MCF 10A (cell line): ENCODE measurements at regions of chr1 and their contacts with region 1.

Region 1: DNA sequence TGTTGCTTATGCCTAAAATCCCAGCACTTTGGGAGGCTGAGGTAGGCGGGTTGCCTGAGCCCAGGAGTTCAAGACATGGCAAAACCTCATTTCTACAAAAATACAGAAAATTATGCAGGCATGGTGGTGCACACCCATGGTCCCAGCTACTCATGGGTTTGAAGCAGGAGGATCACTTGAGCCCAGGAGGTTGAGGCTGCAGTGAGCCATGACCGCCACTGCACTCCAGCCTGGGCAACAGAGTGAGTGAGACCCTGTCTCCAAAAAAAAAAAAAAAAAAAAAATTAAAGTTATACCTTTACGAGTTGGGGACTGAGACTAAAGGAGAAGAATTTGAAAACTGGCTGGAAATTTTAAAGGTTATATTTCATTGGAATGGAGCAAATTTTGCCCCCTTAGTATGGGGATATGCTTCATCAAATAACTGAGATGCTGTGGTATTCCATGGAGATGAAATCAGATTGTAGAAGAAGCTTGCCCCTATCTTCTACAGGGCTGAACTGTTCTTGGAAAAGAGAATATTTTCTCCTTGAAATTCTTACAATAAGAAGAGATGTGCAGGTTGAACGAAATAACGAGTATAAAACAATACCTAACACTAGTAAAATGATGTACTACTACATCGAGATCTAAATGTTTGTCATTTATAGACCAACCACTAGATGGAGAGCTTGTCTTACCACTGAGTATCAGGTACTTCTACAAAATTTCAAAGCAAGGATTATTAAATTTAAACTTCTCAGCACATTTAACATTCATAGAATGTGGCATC is 34.9 kb upstream of the SCYL3 start:
- DNase-seq: peak; percentile 67
- H3K4me3 Mint-ChIP-seq: no peak overlapping the region
- H3K27ac Mint-ChIP-seq: no peak overlapping the region
- H3K4me1 Mint-ChIP-seq: no peaks in the 10 kb centered on the region
- H3K27me3 Mint-ChIP-seq: no peaks in the 10 kb centered on the region
- CTCF ChIP-seq: peak; percentile 84

Region 2: GRCh38 chr1:169914531-169914930 is 14.1 kb before region 1 on chr1:
- CTCF ChIA-PET with region 1: interaction called, 18 read pairs
- POLR2A ChIA-PET with region 1: no interaction called
- intact Hi-C with region 1: no loop called
- DNase-seq: peak; percentile 36
- H3K4me3 Mint-ChIP-seq: no peak overlapping the region
- H3K27ac Mint-ChIP-seq: peak overlapping the region; percentile 61
- H3K4me1 Mint-ChIP-seq: peaks cover 21% of the 10 kb centered on the region
- H3K27me3 Mint-ChIP-seq: no peaks in the 10 kb centered on the region
- CTCF ChIP-seq: no peak

Region 3: DNA sequence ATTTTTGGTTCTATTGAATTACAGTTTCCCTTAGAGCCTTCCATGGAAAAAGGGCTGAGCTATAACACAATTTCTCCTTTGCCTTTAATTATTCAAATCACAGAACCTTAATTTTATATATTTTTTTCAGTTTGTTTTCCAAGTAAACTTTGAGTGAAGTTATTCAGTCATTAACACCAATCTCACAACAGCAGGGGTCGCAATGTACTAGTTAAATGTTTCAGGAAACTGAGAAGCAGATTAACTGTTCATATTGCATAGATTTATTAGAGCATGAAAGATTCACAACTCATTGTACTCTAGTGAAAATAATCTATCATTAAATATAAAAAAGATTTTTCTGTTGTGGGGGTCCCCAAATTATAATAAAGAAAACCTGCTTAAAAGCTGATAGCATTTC is 81.8 kb after region 1 on chr1:
- CTCF ChIA-PET with region 1: no interaction called
- POLR2A ChIA-PET with region 1: no interaction called
- intact Hi-C with region 1: loop called (anchors 2 kb)
- DNase-seq: peak; percentile 74
- H3K4me3 Mint-ChIP-seq: no peak overlapping the region
- H3K27ac Mint-ChIP-seq: no peak overlapping the region
- H3K4me1 Mint-ChIP-seq: no peaks in the 10 kb centered on the region
- H3K27me3 Mint-ChIP-seq: no peaks in the 10 kb centered on the region
- CTCF ChIP-seq: peak; percentile 54

Region 4: DNA sequence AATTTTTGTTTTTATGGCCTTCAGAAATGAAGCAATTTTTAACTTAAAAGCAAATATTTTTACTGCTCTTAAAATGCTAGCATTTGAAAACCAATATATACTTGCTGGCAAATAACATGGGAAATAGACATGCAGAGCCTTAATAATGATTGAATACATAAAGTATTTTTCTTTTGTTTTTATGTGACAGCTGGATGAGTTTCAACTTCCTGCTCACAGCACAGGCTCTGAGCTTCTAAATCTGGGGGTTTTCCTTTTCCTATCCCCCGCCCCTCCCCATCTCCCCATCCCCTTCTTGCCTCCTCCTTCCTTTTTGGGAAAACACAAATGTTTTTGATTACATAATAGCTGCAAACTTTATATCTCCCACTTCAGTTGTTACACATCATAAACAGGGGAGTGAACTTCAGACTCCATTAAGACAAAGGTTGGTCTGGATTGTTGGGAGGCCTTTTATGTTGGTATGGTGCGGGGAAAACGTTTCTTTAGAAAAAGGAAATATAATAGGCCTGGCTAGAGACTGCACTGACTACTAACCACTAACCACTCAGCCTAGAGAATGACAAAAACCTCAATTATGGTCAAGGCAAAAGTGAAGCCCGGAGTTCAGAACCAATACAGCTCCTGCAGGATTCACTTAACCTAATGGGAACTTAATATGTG is 487.2 kb after region 1 on chr1:
- CTCF ChIA-PET with region 1: no interaction called
- POLR2A ChIA-PET with region 1: no interaction called
- intact Hi-C with region 1: no loop called
- DNase-seq: no peak
- H3K4me3 Mint-ChIP-seq: no peak overlapping the region
- H3K27ac Mint-ChIP-seq: no peak overlapping the region
- H3K4me1 Mint-ChIP-seq: peaks cover under 1% of the 10 kb centered on the region
- H3K27me3 Mint-ChIP-seq: no peaks in the 10 kb centered on the region
- CTCF ChIP-seq: no peak

Region 5: GRCh38 chr1:170881268-170882265 is 952.9 kb after region 1 on chr1:
- CTCF ChIA-PET with region 1: interaction called, 9 read pairs
- POLR2A ChIA-PET with region 1: no interaction called
- intact Hi-C with region 1: loop called (anchors 1 kb)
- DNase-seq: peak; percentile 69
- H3K4me3 Mint-ChIP-seq: no peak overlapping the region
- H3K27ac Mint-ChIP-seq: no peak overlapping the region
- H3K4me1 Mint-ChIP-seq: peaks cover 7% of the 10 kb centered on the region
- H3K27me3 Mint-ChIP-seq: peaks cover 12% of the 10 kb centered on the region
- CTCF ChIP-seq: peak; percentile 63